ENCODE measurements at regions of chr3 and their contacts with region 1.

Region 1: DNA sequence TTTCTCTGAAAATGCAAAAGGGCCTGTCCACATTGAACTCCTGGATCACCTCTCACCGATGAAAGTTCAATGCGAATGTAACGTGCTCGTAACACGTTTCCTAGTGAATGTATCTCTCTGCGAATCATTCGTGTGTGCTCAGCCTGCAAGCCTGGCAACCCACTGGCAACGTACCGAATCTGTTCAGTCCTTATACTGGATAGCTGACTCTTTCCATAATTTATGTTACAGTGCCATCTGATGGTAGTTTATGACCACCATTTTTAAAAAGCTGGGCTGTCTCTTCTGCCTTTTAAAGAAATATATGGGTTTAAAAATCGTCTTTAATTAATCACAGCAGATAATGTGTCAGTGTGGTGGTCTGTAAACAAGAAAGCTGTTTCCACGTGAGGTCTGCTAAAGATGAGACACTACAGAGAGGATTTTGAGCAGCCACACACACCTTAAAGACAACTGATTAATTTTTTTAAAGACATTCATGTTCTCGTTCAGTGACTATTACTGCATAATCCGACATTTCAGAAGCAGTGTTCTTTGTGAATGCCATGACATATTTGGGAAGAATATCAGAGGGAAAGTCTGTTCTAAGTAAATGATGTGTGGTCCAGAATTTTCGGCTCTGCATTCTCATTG is 69.4 kb upstream of the FOXP1 start:
- DNase-seq: peak; percentile 29
- H3K4me3 ChIP-seq: no peak overlapping the region
- H3K27ac ChIP-seq: no peak overlapping the region
- H3K4me1 ChIP-seq: peaks cover 6% of the 10 kb centered on the region
- H3K27me3 ChIP-seq: no peaks in the 10 kb centered on the region
- CTCF ChIP-seq: peak; percentile 52 to 55

Region 2: DNA sequence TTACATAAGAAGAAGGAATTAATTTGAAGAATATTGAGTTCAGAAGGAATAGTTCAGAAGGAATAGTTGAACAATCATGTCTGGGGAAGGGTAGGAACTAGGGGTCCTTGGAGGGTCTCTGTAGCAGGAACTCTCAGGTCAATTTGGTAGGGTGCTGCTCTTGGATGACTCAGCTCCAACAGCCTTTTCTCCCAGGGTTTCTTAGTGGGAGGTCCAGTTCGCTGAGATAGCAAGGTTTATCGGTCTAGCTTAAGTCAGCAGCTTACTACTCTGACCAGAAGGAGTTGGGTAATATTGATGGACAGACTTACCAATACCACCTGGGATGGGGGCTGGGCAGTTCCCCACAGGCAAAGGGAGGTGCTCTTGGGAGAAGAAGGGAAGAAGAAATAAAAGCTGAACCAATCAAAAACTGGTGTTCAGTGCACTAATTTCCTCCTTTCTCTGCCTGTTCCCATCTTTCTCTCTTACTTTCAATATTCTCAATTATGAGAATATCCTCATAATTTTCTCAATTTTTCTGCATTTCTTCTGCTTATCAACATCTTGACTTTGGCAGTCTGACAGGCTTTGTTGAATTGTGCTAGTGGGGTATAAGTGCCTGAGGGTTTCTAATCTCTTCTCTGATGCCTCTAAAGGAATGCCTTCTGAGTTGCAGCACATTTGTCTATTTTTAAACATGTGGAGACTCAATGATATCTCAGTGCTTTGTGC is 1928.0 kb before region 1 on chr3:
- CTCF ChIA-PET with region 1: interaction called, 16 read pairs
- dilution Hi-C with region 1: no loop called
- in situ Hi-C with region 1: no loop called
- intact Hi-C with region 1: no loop called
- DNase-seq: no peak
- H3K4me3 ChIP-seq: no peak overlapping the region
- H3K27ac ChIP-seq: no peak overlapping the region
- H3K4me1 ChIP-seq: no peaks in the 10 kb centered on the region
- H3K27me3 ChIP-seq: peaks cover 5% of the 10 kb centered on the region
- CTCF ChIP-seq: no peak

Region 3: GRCh38 chr3:70064194-70064779 is 1588.6 kb before region 1 on chr3:
- CTCF ChIA-PET with region 1: no interaction called
- dilution Hi-C with region 1: no loop called
- in situ Hi-C with region 1: no loop called
- intact Hi-C with region 1: loop called (anchors 2 kb)
- DNase-seq: peak; percentile 3
- H3K4me3 ChIP-seq: no peak overlapping the region
- H3K27ac ChIP-seq: no peak overlapping the region
- H3K4me1 ChIP-seq: no peaks in the 10 kb centered on the region
- H3K27me3 ChIP-seq: peaks cover 3% of the 10 kb centered on the region
- CTCF ChIP-seq: peak; percentile 60 to 67

Region 4: DNA sequence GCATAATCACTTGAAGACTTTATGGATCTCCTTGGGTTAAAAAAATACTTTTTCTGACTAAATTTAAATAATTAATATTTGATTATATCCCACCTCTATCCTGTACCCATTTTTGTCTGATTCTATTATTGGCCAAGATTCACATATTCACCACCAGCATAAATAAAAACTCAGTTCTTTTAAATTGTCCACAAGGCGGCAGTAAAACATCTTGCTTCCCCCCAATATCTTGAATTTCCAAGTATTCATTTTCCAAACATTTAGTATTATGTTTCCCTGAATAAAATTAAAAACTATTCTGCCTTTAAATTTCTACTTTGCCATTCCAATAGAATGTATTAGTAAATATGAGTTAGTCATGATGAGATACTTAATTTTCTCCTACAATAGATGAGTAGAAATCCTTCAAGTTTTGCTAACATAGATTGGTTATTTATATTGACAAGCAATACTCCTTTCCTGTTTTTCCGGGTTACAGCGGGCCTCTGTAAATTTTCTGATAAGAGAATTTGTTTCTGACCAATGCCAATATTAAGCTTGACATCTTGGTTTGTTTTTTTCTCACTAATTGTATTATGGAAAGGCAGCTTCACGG is 1121.7 kb before region 1 on chr3:
- CTCF ChIA-PET with region 1: no interaction called
- dilution Hi-C with region 1: no loop called
- in situ Hi-C with region 1: loop called (anchors 25 kb)
- intact Hi-C with region 1: loop called (anchors 1 kb)
- DNase-seq: peak; percentile 3
- H3K4me3 ChIP-seq: no peak overlapping the region
- H3K27ac ChIP-seq: no peak overlapping the region
- H3K4me1 ChIP-seq: no peaks in the 10 kb centered on the region
- H3K27me3 ChIP-seq: peaks cover 11% of the 10 kb centered on the region
- CTCF ChIP-seq: peak; percentile 51 to 55

Region 5: DNA sequence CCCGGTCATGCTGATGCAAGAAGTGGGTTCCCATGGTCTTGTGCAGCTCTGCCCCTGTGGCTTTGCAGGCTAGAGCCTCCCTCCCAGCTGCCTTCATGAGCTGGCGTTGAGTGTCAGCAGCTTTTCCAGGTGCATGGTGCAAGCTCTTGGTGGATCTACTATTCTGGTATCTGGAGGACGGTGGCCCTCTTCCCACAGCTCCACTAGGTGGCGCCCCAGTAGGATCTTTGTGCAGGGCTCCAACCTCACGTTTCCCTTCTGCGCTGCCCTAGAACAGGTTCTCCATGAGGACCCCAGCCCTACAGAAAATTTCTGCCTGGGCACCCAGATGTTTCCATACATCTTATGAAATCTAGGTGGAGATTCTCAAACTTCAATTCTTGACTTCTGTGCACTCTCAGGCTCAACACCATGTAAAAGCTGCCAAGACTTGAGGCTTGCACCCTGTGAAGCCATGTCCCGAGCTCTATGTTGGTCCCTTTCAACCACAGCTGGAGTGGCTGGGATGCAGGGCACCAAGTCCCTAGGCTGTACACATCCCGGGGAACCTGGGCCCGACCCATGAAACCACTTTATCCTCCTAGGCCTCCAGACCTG is 1102.1 kb before region 1 on chr3:
- CTCF ChIA-PET with region 1: no interaction called
- dilution Hi-C with region 1: no loop called
- in situ Hi-C with region 1: loop called (anchors 25 kb)
- intact Hi-C with region 1: loop called (anchors 1 kb)
- DNase-seq: peak; percentile 45
- H3K4me3 ChIP-seq: no peak overlapping the region
- H3K27ac ChIP-seq: no peak overlapping the region
- H3K4me1 ChIP-seq: no peaks in the 10 kb centered on the region
- H3K27me3 ChIP-seq: peaks cover 2% of the 10 kb centered on the region
- CTCF ChIP-seq: peak; percentile 57 to 82

Region 6: DNA sequence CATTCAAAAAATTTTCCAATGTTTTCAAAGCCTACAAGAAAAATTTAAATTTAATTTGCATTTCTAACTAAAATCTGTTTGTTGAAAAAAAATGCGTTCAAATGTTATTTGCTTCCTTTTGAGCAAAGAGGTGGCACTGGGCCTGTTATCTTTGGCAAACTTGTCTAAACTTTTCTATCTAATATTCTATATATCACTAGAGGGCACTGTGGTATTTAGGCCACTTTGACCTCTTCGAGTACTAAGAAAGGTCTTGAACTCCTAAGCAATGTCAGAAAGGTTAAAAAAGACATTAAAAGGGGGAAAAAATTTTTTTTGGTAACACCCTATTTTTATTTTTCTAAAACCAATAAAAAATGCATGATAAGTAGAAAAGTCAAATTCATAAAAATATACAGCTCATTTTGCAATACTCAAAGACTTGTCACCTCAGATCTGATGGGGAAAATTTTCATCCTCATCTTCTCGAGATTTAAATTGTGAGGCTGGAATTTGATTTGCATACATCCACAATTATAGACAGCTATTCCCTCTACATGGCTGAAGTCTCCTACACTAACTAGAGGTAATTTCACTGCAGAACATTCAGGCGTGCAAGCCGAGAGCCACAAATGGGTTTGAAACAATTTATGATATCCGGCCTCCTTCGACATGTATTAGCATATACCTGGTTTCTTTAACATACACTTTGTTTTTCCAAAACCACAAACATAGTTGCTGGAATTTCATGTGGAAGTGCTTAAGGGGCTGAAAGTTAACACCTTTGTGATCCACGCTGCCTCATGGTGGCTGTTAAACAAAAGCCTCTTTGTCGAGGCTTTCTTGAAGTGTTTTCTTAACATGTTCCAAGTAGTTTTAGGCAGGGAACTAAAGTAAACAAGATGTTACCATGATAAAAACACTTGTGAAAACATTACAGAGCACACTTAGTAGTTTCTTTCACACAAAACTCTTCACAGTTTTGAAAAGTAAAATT is 645.8 kb before region 1 on chr3:
- CTCF ChIA-PET with region 1: no interaction called
- dilution Hi-C with region 1: no loop called
- in situ Hi-C with region 1: no loop called
- intact Hi-C with region 1: loop called (anchors 10 kb)
- DNase-seq: peak; percentile 93
- H3K4me3 ChIP-seq: no peak overlapping the region
- H3K27ac ChIP-seq: peak overlapping the region; percentile 91
- H3K4me1 ChIP-seq: peaks cover 33% of the 10 kb centered on the region
- H3K27me3 ChIP-seq: no peaks in the 10 kb centered on the region
- CTCF ChIP-seq: peak; percentile 27 to 56

Region 7: GRCh38 chr3:71601811-71602210 is 51.1 kb before region 1 on chr3:
- CTCF ChIA-PET with region 1: no interaction called
- dilution Hi-C with region 1: loop called (anchors 10 kb)
- in situ Hi-C with region 1: no loop called
- intact Hi-C with region 1: no loop called
- DNase-seq: peak; percentile 57
- H3K4me3 ChIP-seq: no peak overlapping the region
- H3K27ac ChIP-seq: no peak overlapping the region
- H3K4me1 ChIP-seq: peaks cover 9% of the 10 kb centered on the region
- H3K27me3 ChIP-seq: no peaks in the 10 kb centered on the region
- CTCF ChIP-seq: no peak